ENCODE measurements at regions of chr6 and their contacts with region 1.

Region 1: GRCh38 chr6:5670811-5671561 is 335.7 kb downstream of the NRN1 start:
- DNase-seq: peak in 2 of 9 experiments; percentile 22 to 63
- ATAC-seq: peak; percentile 45
- H3K4me3 ChIP-seq: no peak overlapping the region
- H3K4me3 Mint-ChIP-seq: peak overlapping the region; percentile 33
- H3K27ac ChIP-seq: no peak overlapping the region
- H3K27ac Mint-ChIP-seq: peak overlapping the region; percentile 55
- H3K4me1 ChIP-seq: peaks cover 57% of the 10 kb centered on the region
- H3K4me1 Mint-ChIP-seq: peaks cover 65% of the 10 kb centered on the region
- H3K27me3 ChIP-seq: no peaks in the 10 kb centered on the region
- H3K27me3 Mint-ChIP-seq: no peaks in the 10 kb centered on the region
- CTCF ChIP-seq: no peak

Region 2: GRCh38 chr6:4760773-4761172 is 910.2 kb before region 1 on chr6:
- CTCF ChIA-PET with region 1: no interaction called
- POLR2A ChIA-PET with region 1: no interaction called
- intact Hi-C with region 1: no loop called
- DNase-seq: no peak
- ATAC-seq: no peak
- H3K4me3 ChIP-seq: no peak overlapping the region
- H3K4me3 Mint-ChIP-seq: no peak overlapping the region
- H3K27ac ChIP-seq: no peak overlapping the region
- H3K27ac Mint-ChIP-seq: no peak overlapping the region
- H3K4me1 ChIP-seq: no peaks in the 10 kb centered on the region
- H3K4me1 Mint-ChIP-seq: no peaks in the 10 kb centered on the region
- H3K27me3 ChIP-seq: peaks cover 0 to 5% of the 10 kb centered on the region in 2 experiments
- H3K27me3 Mint-ChIP-seq: peaks cover 20% of the 10 kb centered on the region
- CTCF ChIP-seq: no peak

Region 3: GRCh38 chr6:5892669-5893068 is 221.7 kb after region 1 on chr6:
- CTCF ChIA-PET with region 1: no interaction called
- POLR2A ChIA-PET with region 1: no interaction called
- intact Hi-C with region 1: loop called in 1 of 2 experiments (anchors 5 kb)
- DNase-seq: no peak
- ATAC-seq: no peak
- H3K4me3 ChIP-seq: peak overlapping the region; percentile 17 to 28
- H3K4me3 Mint-ChIP-seq: no peak overlapping the region
- H3K27ac ChIP-seq: peak overlapping the region; percentile 28 to 74
- H3K27ac Mint-ChIP-seq: no peak overlapping the region
- H3K4me1 ChIP-seq: peaks cover 9% of the 10 kb centered on the region
- H3K4me1 Mint-ChIP-seq: peaks cover 4% of the 10 kb centered on the region
- H3K27me3 ChIP-seq: no peaks in the 10 kb centered on the region
- H3K27me3 Mint-ChIP-seq: no peaks in the 10 kb centered on the region
- CTCF ChIP-seq: no peak